ENCODE measurements at regions of chr10 and their contacts with region 1.

Region 1: GRCh38 chr10:31808258-31809218 is 120.1 kb downstream of the ARHGAP12 start:
- DNase-seq: peak; percentile 29
- H3K4me3 Mint-ChIP-seq: peak overlapping the region; percentile 48
- H3K27ac Mint-ChIP-seq: peak overlapping the region; percentile 63
- H3K4me1 Mint-ChIP-seq: peaks cover 6% of the 10 kb centered on the region
- H3K27me3 Mint-ChIP-seq: no peaks in the 10 kb centered on the region

Region 2: DNA sequence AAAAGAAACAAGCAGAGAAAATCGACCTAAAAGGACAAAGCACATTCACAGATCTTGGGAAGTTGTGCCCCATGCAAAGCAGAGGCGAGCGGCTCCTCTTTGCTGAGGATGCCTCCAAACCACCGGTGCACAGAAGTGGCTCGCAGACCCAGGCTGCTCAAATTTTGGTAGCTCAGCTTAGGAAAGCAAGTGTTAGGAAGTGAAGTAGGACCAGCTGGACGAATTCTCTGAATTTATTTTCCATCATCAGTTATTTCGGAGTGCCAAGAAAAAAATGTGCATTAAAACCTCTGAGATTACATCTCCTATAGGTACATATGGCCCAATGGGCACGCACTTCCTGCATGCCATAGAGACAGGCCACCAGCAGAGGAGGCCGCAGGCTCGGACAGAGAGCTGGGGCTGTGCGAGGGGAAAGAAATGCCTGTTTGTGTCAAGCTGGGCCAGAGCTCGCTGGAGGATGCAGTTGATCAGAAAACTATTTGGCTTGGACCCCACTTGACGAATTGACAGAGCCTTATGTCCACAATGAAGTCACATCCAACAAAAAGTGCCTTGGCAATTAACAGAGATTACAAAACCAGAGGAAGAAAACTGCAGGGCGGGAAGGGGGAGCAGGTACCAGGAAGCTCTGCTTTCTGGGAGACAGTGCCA is 1056.7 kb before region 1 on chr10:
- CTCF ChIA-PET with region 1: interaction called, 11 read pairs
- POLR2A ChIA-PET with region 1: no interaction called
- intact Hi-C with region 1: no loop called
- DNase-seq: peak; percentile 77
- H3K4me3 Mint-ChIP-seq: no peak overlapping the region
- H3K27ac Mint-ChIP-seq: peak overlapping the region; percentile 24
- H3K4me1 Mint-ChIP-seq: peaks cover 41% of the 10 kb centered on the region
- H3K27me3 Mint-ChIP-seq: peaks cover 3% of the 10 kb centered on the region

Region 3: DNA sequence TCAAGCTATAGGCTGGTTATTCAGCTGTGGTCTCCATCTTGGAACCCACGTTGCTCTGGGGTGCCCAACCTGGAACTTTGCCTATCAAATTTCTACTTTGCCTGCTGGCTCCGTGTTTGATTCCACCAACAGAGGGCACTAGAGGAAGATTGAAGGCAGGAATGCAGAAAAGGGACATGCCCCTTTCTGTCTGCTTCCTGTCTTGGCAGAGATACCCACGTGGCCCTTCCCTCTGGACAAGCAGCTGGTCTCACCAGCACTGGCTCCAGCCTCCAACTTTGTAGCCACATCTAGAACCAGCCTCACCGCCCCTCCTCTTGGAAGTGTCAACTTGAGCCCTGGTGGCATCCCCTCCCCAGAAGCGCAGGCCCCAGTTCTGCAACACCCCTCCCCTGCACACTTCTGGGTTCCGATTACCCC is 724.8 kb before region 1 on chr10:
- CTCF ChIA-PET with region 1: interaction called, 3 read pairs
- POLR2A ChIA-PET with region 1: no interaction called
- intact Hi-C with region 1: loop called (anchors 1 kb)
- DNase-seq: peak; percentile 79
- H3K4me3 Mint-ChIP-seq: no peak overlapping the region
- H3K27ac Mint-ChIP-seq: no peak overlapping the region
- H3K4me1 Mint-ChIP-seq: peaks cover 3% of the 10 kb centered on the region
- H3K27me3 Mint-ChIP-seq: no peaks in the 10 kb centered on the region

Region 4: DNA sequence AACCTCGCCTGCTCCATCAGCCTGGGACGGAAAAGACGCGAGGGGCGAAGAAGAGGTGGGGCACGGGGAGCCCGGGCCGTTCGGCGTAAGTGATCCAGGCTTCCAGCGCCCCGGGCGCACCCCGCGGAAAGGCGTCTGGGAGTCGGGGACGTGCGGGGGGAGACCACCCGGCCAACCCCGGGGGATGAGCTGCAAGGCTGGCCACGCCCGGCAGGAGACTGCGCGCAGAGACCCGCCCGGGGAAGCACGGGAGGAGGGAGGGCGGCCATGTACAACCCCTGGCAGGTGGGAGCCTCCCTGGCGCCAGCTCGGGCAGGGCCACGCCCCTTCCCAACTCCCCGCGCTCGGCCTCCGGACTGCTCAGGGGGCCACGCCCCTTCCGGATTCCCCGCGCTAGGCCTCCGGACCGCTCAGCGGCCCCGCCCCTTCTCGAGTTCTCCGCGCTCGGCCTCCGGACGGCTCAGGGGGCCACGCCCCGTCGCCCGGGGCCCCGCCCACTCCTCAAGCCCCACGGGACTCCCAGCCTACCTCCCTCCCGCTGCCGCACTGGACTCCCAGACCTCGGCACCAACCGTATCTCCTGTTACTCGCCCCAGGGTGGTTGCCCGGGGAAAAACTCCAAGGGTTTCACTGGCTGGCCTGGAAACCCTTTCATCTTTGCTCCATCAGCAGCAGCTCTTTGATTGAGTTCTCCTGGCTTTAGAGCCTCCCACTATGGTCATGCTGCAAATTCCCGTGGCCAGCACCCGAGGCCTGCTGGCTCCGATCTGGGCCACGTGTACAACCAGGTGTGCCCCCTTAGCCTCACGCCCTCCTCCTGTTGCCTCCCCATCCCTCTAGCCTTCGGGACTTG is 205.1 kb before region 1 on chr10:
- CTCF ChIA-PET with region 1: no interaction called
- POLR2A ChIA-PET with region 1: no interaction called
- intact Hi-C with region 1: loop called (anchors 2 kb)
- DNase-seq: peak; percentile 93
- H3K4me3 Mint-ChIP-seq: peak overlapping the region; percentile 77
- H3K27ac Mint-ChIP-seq: no peak overlapping the region
- H3K4me1 Mint-ChIP-seq: peaks cover 25% of the 10 kb centered on the region
- H3K27me3 Mint-ChIP-seq: peaks cover 1% of the 10 kb centered on the region

Region 5: DNA sequence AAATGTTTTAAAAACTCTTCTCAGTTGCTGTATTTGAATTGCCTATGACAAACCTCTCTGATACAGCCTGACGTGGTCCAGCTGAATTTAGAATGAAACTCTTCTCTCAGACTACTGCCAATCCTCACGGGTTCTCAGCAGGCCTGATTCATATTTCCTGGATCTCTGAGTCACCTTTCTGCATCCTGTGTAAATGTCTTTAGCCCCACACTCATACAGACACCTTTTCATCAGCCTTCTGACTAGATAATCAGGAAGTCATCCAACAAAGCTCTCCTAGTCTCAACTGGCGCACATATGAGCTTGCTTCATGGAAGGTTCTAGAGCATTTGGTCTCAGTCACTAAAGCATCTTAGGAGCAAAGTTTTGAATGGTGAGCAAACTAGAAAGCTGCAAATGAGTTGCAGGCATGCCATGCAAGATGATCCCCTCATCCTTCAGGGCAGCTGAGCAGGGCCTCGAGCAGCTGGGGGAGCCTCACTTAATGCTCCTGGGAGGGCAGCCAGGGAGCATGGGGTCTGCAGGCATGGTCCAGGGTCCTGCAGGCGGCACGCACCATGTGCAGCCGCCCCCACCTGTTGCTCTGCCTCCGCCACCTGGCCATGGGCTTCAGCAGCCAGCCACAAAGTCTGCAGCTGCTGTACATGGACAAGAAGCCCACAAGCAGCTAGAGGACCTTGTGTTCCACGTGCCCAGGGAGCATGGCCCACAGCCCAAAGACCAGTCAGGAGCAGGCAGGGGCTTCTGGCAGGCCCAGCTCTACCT is 62.7 kb before region 1 on chr10:
- CTCF ChIA-PET with region 1: interaction called, 4 read pairs
- POLR2A ChIA-PET with region 1: no interaction called
- intact Hi-C with region 1: loop called (anchors 1 kb)
- DNase-seq: peak; percentile 76
- H3K4me3 Mint-ChIP-seq: peak overlapping the region; percentile 38
- H3K27ac Mint-ChIP-seq: peak overlapping the region; percentile 95
- H3K4me1 Mint-ChIP-seq: peaks cover 38% of the 10 kb centered on the region
- H3K27me3 Mint-ChIP-seq: no peaks in the 10 kb centered on the region

Measured in activated CD4-positive, alpha-beta memory T cell treated with anti-CD3 and anti-CD28 coated beads for 36 hours (primary cell).